Activated naive CD4-positive, alpha-beta T cell treated with anti-CD3 and anti-CD28 coated beads, Interleukin-2, amount 10 ng/mL, durations not matched to agents 7 days and 5 days (primary cell): ENCODE measurements at regions of chr5 and their contacts with region 1.

Region 1: DNA sequence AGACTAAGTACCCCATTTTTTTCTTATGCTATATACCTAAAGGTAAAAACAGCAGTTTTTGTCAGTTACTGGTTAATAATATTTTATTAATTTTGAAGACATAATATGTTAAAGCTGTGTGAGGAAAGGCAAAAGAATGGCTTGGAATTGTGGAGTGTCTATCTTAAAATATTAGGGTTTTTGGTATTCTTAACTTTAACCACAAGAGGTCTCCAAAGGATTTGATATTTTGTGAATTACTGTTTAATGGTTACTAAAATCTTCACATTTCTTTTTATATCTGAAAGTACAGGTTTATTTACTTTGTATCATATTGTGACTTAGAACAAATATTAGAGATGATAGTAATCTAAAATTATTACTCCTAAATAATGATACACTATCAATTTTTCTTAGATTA is 32.0 kb upstream of the DHFR start:
- DNase-seq: no peak
- H3K4me3 Mint-ChIP-seq: no peak overlapping the region
- H3K27ac Mint-ChIP-seq: no peak overlapping the region
- H3K4me1 Mint-ChIP-seq: peaks cover 23% of the 10 kb centered on the region
- H3K27me3 Mint-ChIP-seq: no peaks in the 10 kb centered on the region

Region 2: DNA sequence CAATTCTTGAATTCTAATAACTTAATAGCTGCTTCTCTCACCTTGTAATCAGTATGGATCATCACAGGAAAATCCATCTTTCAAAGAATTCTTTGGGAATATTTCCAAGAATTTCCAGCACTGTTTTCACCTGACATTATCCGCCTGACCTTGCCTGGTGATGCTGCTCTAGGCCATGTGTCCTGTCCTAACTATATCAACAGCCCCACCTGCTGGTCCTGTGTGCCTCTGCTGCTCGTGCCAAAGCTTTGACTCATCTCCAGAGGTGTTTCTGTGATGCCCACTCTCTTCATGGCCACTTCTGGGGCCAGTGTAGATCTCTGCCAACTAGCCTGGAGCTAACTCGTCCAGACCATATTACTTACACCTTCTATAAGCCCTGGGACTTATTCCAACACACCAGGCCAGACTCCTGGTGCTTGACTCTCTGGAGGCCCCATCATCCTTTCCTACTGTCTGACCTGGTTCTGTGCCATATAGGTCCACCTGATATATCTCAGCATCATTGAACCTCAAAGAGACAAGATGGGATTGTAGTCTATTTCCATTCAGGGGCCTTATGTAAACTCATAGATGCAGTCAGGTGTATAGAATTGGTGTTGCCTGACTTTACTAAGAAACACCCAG is 478.8 kb after region 1 on chr5:
- CTCF ChIA-PET with region 1: interaction called, 30 read pairs
- DNase-seq: peak; percentile 81
- H3K4me3 Mint-ChIP-seq: no peak overlapping the region
- H3K27ac Mint-ChIP-seq: no peak overlapping the region
- H3K4me1 Mint-ChIP-seq: peaks cover 3% of the 10 kb centered on the region
- H3K27me3 Mint-ChIP-seq: no peaks in the 10 kb centered on the region

Region 3: DNA sequence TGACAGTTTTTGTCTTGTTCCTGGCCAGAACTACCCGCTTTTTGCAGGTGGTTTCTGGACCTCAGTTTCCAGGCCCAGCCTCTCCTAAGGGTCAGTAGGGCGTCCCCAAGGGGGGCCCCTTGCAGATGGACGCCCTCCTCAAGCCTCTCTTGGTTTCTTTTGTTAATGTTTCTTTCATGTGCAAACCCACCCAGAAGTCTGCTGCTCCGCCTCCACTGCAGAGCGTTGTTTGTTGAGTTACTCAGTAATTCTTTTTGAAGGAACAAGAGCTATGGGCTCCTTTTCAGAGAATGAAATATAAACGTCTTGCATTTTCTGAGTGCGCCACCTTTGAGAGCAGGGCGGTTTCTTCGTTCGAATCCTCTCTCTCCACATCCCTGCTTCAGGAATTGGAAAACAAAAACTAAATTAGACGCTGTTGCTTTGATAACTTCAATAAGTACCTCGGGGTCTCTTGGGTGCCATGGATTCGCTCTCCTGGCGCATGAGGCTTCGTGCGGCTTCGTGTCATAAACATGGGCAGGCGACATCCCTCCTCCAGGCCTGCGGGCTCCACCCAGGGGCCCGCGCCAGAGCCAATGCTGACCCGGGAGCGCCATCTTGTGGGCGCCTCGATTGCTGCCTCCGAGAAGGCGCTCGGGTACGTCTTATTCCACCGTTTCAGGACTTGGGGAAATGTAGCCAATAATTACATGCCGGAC is 508.0 kb after region 1 on chr5:
- CTCF ChIA-PET with region 1: interaction called, 14 read pairs
- DNase-seq: peak; percentile 87
- H3K4me3 Mint-ChIP-seq: no peak overlapping the region
- H3K27ac Mint-ChIP-seq: no peak overlapping the region
- H3K4me1 Mint-ChIP-seq: peaks cover 11% of the 10 kb centered on the region
- H3K27me3 Mint-ChIP-seq: peaks cover 4% of the 10 kb centered on the region